ENCODE measurements at regions of chr1 and their contacts with region 1.

Region 1: GRCh38 chr1:110495926-110496600 is 22.9 kb downstream of the KCNA10 start:
- DNase-seq: peak; percentile 74
- H3K4me3 ChIP-seq: no peak overlapping the region
- H3K27ac ChIP-seq: no peak overlapping the region
- H3K4me1 ChIP-seq: no peaks in the 10 kb centered on the region
- H3K27me3 ChIP-seq: no peaks in the 10 kb centered on the region

Region 2: DNA sequence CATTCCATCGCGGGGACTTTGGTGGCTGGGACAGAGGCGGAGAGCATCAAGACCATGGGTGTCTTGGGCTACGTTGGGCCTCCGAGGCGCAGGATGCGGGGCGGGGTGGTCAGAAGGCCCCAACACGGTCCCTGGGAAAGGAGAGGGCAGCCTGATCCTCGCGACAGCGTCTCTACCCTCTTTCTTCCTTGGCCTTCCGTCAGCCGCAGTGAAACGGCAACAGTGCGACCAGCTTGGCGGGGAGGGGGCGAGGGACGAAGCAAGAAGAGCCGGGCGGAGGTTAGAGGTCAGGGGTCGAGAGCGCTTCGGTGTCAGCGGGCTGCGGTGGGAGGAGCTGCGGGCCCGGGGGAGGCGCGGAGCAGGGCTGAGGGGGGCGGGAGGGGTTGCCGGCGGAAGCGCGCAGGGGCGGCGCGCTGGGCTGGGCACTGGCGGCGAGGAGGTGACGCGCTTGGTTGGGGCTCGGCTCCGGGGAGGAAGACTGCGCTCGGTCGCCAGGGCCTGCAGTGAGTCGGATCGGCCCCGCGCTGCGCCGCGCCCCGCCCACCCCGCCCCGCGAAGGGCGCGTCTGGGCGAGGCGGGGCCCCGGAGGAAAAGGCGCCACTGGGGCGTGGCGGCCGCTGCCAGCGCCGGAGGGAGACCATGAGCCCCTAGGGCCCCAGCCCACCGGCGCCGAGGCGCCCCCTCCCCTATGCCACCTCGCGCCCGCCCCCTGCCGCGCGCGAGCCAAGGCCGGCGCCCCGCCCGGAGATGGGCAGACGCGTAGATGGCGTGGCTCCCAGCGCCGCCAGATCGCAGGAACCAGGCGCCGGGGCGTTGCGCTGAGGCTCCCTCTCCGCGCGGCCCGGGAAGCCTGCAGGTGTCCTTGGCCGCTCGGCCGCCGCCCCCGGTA is 286.1 kb before region 1 on chr1 and contains the start of gene KCNC4:
- in situ Hi-C with region 1: loop called (anchors 10 kb)
- DNase-seq: peak; percentile 95
- H3K4me3 ChIP-seq: peak within 1 kb of the TSS; percentile 83
- H3K27ac ChIP-seq: peak within 1 kb of the TSS; percentile 59
- H3K4me1 ChIP-seq: peaks cover 27% of the 10 kb centered on the region
- H3K27me3 ChIP-seq: no peaks in the 10 kb centered on the region
- total RNA-seq, gene KCNC4: 12.1 and 29.3 TPM in 2 replicates

Region 3: DNA sequence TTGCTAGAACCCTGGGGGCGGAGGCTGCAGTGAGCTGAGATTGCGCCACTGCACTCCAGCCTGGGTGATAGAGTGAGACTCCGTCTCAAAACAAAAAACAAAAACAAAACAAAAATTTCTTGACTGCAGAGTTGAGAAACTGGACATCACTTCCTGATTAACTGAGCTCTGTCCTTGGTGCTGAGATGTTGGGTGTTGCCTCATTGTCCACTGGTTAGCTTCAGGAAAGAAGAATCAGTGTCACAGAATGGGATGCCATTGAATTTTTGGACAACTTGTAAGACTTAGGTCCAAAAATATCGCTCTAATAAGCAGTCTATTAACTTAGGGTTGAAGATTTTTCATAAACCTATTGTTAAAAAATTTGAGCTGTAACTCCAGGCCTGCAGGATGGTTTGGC is 46.7 kb after region 1 on chr1:
- in situ Hi-C with region 1: no loop called
- DNase-seq: peak; percentile 67
- H3K4me3 ChIP-seq: no peak overlapping the region
- H3K27ac ChIP-seq: no peak overlapping the region
- H3K4me1 ChIP-seq: no peaks in the 10 kb centered on the region
- H3K27me3 ChIP-seq: peaks cover 8% of the 10 kb centered on the region

Measured in GM23248 (cell line).